ENCODE measurements at regions of chr14 and their contacts with region 1.

Region 1: DNA sequence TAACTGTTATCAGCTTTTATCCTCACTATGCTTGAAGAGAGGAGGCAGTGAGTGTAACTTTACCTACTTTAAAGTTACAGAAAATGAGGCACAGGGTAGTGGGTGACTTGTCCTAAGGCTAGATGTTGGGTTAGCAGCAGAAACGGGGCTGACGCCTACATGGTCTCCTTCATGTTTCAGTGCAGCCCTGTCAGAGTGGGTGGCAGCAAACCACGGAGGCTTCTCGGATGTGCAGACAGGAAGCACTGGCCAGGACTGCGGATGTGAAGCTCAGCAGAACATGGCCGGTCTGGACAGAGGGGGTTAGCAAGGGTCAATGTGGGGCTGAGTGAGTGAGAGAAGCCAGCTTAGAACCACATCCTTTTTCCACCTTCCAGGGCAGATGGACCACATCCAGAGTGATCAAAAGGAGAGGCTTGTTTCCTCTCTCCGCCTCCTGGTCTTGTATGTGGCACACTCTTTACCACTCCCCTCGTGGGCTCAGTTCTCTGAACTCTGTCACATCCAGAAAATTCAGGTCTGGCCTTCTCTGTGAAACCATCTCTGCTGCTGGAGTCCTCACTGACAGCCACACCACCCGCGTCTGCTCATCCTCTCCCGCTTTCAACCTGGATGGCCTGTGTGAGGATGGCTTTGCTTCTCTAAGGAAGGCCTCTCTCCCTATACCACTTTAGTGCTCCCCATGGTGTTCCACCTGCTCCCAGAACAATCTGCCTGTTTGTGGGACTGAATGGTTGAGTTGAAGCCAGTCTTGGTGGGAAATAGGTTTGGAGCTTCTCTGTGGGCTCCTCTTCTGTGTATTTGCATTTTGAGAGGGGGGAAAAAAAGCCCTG is 14.1 kb downstream of the SUSD6 start:
- DNase-seq: peak; percentile 88
- ATAC-seq: peak; percentile 93
- H3K4me3 ChIP-seq: peak overlapping the region; percentile 65
- H3K27ac ChIP-seq: peak overlapping the region; percentile 82
- H3K4me1 ChIP-seq: peaks cover 61% of the 10 kb centered on the region
- H3K27me3 ChIP-seq: no peaks in the 10 kb centered on the region
- CTCF ChIP-seq: no peak
- EP300 ChIP-seq: peak in 1 of 2 experiments; percentile 67; a peak in 1 of 4 replicates
- POLR2A ChIP-seq: peak; percentile 60; the same call in 1 of the 2 replicates
- RAD21 ChIP-seq: peak; percentile 21; the same call in 1 of the 2 replicates

Region 2: GRCh38 chr14:69580009-69580577 is 45.4 kb before region 1 on chr14:
- CTCF ChIA-PET with region 1: no interaction called
- POLR2A ChIA-PET with region 1: no interaction called
- RAD21 ChIA-PET with region 1: no interaction called
- SMC1A ChIA-PET with region 1: no interaction called
- in situ Hi-C with region 1: no loop called
- intact Hi-C with region 1: no loop called
- DNase-seq: no peak
- ATAC-seq: peak; percentile 74
- H3K4me3 ChIP-seq: no peak overlapping the region
- H3K27ac ChIP-seq: no peak overlapping the region
- H3K4me1 ChIP-seq: no peaks in the 10 kb centered on the region
- H3K27me3 ChIP-seq: peaks cover 0 to 1% of the 10 kb centered on the region in 2 experiments; a peak in 1 of 4 replicates
- CTCF ChIP-seq: peak; percentile 43 to 53 (median 47)
- EP300 ChIP-seq: no peak
- POLR2A ChIP-seq: no peak
- RAD21 ChIP-seq: peak; percentile 39

Region 3: GRCh38 chr14:69637503-69638030 is 12.1 kb after region 1 on chr14:
- CTCF ChIA-PET with region 1: interaction called, 9 read pairs
- POLR2A ChIA-PET with region 1: interaction called, 8 read pairs
- RAD21 ChIA-PET with region 1: interaction called, 39 read pairs
- SMC1A ChIA-PET with region 1: interaction called, 336 read pairs
- in situ Hi-C with region 1: no loop called
- intact Hi-C with region 1: no loop called
- DNase-seq: no peak
- ATAC-seq: peak; percentile 57
- H3K4me3 ChIP-seq: peak overlapping the region; percentile 43; the same call in 1 of the 2 replicates
- H3K27ac ChIP-seq: peak overlapping the region; percentile 72
- H3K4me1 ChIP-seq: peaks cover 65% of the 10 kb centered on the region
- H3K27me3 ChIP-seq: no peaks in the 10 kb centered on the region
- CTCF ChIP-seq: no peak
- EP300 ChIP-seq: no peak
- POLR2A ChIP-seq: no peak
- RAD21 ChIP-seq: no peak

Region 4: DNA sequence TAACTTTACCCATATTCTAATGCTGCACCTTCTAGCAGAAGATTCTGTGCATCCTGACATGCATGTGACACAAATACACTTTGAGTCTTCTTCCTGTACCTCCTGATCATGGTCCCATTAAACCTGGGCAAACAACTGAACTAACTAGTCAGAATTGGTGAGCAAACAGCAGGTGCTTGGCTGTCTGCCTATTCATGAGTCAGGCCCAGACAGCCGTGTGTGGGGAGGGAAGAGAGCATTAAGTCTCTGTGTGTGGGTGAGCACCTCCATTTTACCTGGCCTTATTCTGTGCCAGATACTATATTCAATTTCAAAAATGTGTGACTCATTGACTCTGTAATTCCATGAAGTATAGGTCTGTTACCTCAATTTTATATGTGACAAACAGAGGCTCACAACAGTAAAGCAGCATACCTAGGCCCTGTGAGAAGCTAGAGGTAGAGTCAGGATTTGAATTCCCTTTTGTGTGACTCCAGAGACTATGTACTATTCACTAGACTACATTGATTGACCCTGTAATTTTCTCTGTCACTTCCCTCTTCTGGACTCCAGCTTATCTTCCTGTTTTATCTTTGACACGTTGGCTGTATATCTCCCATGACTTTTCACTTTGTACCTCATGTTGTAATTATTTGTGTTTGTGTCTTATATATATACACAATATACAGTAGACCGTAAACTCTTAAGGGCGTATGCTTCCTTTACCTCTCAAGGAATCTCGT is 18.1 kb after region 1 on chr14:
- CTCF ChIA-PET with region 1: interaction called, 15 read pairs
- POLR2A ChIA-PET with region 1: interaction called, 40 read pairs
- RAD21 ChIA-PET with region 1: interaction called, 59 read pairs
- SMC1A ChIA-PET with region 1: interaction called, 336 read pairs
- in situ Hi-C with region 1: no loop called
- intact Hi-C with region 1: no loop called
- DNase-seq: no peak
- ATAC-seq: no peak
- H3K4me3 ChIP-seq: no peak overlapping the region
- H3K27ac ChIP-seq: peak overlapping the region; percentile 83
- H3K4me1 ChIP-seq: peaks cover 45% of the 10 kb centered on the region
- H3K27me3 ChIP-seq: no peaks in the 10 kb centered on the region
- CTCF ChIP-seq: no peak
- EP300 ChIP-seq: no peak
- POLR2A ChIP-seq: no peak
- RAD21 ChIP-seq: no peak